ENCODE measurements at regions of chr3 and their contacts with region 1.

Region 1: GRCh38 chr3:122258757-122259371 is 66.2 kb upstream of the CSTA start:
- DNase-seq: peak; percentile 58
- H3K4me3 ChIP-seq: no peak overlapping the region
- H3K27ac ChIP-seq: no peak overlapping the region
- H3K4me1 ChIP-seq: peaks cover 6% of the 10 kb centered on the region
- H3K27me3 ChIP-seq: no peaks in the 10 kb centered on the region
- CTCF ChIP-seq: peak; percentile 63 to 85

Region 2: GRCh38 chr3:121574449-121574848 is 684.4 kb before region 1 on chr3:
- CTCF ChIA-PET with region 1: no interaction called
- dilution Hi-C with region 1: no loop called
- in situ Hi-C with region 1: loop called in 1 of 2 experiments (anchors 25 kb)
- intact Hi-C with region 1: no loop called
- DNase-seq: peak; percentile 42
- H3K4me3 ChIP-seq: no peak overlapping the region
- H3K27ac ChIP-seq: no peak overlapping the region
- H3K4me1 ChIP-seq: no peaks in the 10 kb centered on the region
- H3K27me3 ChIP-seq: no peaks in the 10 kb centered on the region
- CTCF ChIP-seq: no peak

Region 3: GRCh38 chr3:121979734-121980449 is 279.0 kb before region 1 on chr3:
- CTCF ChIA-PET with region 1: no interaction called
- dilution Hi-C with region 1: no loop called
- in situ Hi-C with region 1: no loop called
- intact Hi-C with region 1: loop called (anchors 2 kb)
- DNase-seq: peak; percentile 69
- H3K4me3 ChIP-seq: peak overlapping the region in 2 of 3 experiments; percentile 26
- H3K27ac ChIP-seq: peak overlapping the region; percentile 46
- H3K4me1 ChIP-seq: peaks cover 37% of the 10 kb centered on the region
- H3K27me3 ChIP-seq: no peaks in the 10 kb centered on the region
- CTCF ChIP-seq: no peak

Region 4: DNA sequence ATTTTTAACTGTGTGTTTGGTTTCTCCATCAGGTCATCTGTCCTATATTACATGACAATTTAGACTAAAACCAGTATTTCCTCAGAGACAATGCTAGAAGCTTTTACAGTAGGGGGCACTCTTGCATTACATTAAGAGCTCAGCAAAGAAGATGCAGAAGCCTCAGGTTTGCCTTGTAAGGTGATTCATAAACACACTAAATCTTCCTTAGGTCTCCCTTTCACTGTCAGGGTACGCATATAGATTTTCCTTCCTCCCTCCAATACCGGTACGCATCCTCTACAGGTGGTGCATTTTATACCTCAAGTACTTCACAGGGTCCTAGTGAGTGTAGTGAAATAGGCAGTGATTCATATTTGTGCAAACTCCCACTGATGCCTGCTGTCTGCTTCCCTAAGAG is 157.2 kb before region 1 on chr3:
- CTCF ChIA-PET with region 1: interaction called, 27 read pairs
- dilution Hi-C with region 1: no loop called
- in situ Hi-C with region 1: loop called (anchors 10 kb)
- intact Hi-C with region 1: loop called (anchors 1 kb)
- DNase-seq: peak; percentile 66
- H3K4me3 ChIP-seq: no peak overlapping the region
- H3K27ac ChIP-seq: no peak overlapping the region
- H3K4me1 ChIP-seq: no peaks in the 10 kb centered on the region
- H3K27me3 ChIP-seq: no peaks in the 10 kb centered on the region
- CTCF ChIP-seq: peak; percentile 73 to 76

Region 5: DNA sequence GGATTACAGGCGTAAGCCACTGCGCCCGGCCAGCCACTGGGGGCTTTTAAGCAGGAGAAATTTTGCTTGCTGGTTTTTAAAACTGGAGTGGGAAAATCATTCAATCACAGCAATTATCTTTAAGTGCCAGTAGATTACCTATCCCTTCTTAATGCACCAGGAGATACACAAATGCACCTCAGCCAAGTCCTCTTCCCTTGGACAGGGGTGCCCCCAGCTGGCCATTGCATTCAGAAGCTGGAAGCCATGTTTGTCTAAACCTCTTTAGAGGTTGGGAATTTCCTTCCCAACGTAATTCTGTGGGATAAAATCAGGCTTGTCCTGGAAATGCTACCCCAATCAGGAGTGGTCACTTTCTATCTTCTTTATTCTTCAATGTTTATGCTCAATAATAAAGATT is 97.6 kb after region 1 on chr3:
- CTCF ChIA-PET with region 1: no interaction called
- dilution Hi-C with region 1: no loop called
- in situ Hi-C with region 1: no loop called
- intact Hi-C with region 1: loop called (anchors 1 kb)
- DNase-seq: peak; percentile 72
- H3K4me3 ChIP-seq: no peak overlapping the region
- H3K27ac ChIP-seq: no peak overlapping the region
- H3K4me1 ChIP-seq: peaks cover 21% of the 10 kb centered on the region
- H3K27me3 ChIP-seq: no peaks in the 10 kb centered on the region
- CTCF ChIP-seq: peak; percentile 68 to 84

Measured in mammary epithelial cell (primary cell).